ENCODE measurements at regions of chr6 and their contacts with region 1.

Region 1: DNA sequence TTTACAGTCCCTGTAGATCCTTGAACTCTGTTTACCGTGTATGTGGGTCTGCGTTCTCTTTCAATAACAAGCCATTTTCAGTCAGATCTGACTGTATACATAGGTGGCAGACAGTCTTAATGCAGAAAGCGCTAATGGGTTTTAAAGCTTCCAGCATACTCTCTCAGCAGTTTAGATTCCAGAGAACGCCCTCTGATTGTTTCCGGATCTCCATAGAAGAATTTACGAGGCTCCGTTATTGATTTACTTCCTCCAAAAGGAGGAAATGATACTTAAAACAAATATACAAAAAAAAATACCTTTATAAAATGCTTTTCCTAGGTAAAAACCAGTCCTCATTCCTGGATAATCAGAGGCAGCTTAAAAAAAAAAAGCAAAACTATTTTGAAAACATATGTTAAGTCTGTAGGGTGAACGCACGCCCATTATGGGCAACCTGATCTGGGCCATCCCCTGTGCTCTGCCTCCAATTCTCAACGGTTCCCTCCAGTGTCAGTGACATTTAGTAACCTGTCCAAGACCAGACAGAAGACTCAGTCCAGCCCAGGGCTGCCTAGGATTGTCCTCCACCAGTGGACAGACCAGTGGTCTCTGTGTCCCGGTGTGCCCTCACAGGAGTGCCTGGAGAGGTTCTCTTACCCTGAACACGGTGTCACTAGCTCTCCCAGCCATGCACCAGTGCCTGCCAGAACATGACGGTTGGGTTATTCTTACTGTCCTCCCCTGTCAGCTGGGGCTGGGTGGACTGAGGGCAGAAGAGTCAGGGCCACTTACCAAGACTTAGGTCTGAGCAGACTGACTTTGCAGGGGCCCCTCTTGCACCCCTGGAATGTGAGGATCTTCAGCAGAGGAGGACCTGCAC is 217.3 kb downstream of the ARID1B start:
- DNase-seq: no peak
- H3K4me3 ChIP-seq: no peak overlapping the region
- H3K27ac ChIP-seq: no peak overlapping the region
- H3K4me1 ChIP-seq: no peaks in the 10 kb centered on the region
- H3K27me3 ChIP-seq: no peaks in the 10 kb centered on the region
- CTCF ChIP-seq: no peak
- POLR2A ChIP-seq: no peak

Region 2: GRCh38 chr6:157364705-157365104 is 370.3 kb after region 1 on chr6:
- intact Hi-C with region 1: loop called (anchors 5 kb)
- DNase-seq: no peak
- H3K4me3 ChIP-seq: no peak overlapping the region
- H3K27ac ChIP-seq: no peak overlapping the region
- H3K4me1 ChIP-seq: no peaks in the 10 kb centered on the region
- H3K27me3 ChIP-seq: no peaks in the 10 kb centered on the region
- CTCF ChIP-seq: no peak
- POLR2A ChIP-seq: no peak

Measured in breast epithelium (tissue), 4 donors.